ENCODE measurements at regions of chr4 and their contacts with region 1.

Region 1: GRCh38 chr4:106809076-106809475 is 227.0 kb downstream of the DKK2 start:
- DNase-seq: peak; percentile 48
- H3K4me3 ChIP-seq: no peak overlapping the region
- H3K27ac ChIP-seq: no peak overlapping the region
- H3K4me1 ChIP-seq: no peaks in the 10 kb centered on the region
- H3K27me3 ChIP-seq: no peaks in the 10 kb centered on the region
- CTCF ChIP-seq: peak; percentile 50 to 71

Region 2: GRCh38 chr4:106502106-106502699 is 306.9 kb before region 1 on chr4:
- CTCF ChIA-PET with region 1: no interaction called
- dilution Hi-C with region 1: no loop called
- in situ Hi-C with region 1: no loop called
- intact Hi-C with region 1: loop called (anchors 1 kb)
- DNase-seq: peak; percentile 52
- H3K4me3 ChIP-seq: no peak overlapping the region
- H3K27ac ChIP-seq: no peak overlapping the region
- H3K4me1 ChIP-seq: no peaks in the 10 kb centered on the region
- H3K27me3 ChIP-seq: no peaks in the 10 kb centered on the region
- CTCF ChIP-seq: peak; percentile 65 to 87

Region 3: GRCh38 chr4:106746451-106746850 is 62.6 kb before region 1 on chr4:
- CTCF ChIA-PET with region 1: no interaction called
- dilution Hi-C with region 1: no loop called
- in situ Hi-C with region 1: no loop called
- intact Hi-C with region 1: no loop called
- DNase-seq: peak; percentile 9
- H3K4me3 ChIP-seq: no peak overlapping the region
- H3K27ac ChIP-seq: no peak overlapping the region
- H3K4me1 ChIP-seq: no peaks in the 10 kb centered on the region
- H3K27me3 ChIP-seq: no peaks in the 10 kb centered on the region
- CTCF ChIP-seq: no peak

Measured in mammary epithelial cell (primary cell).